ENCODE measurements at regions of chr16 and their contacts with region 1.

Region 1: DNA sequence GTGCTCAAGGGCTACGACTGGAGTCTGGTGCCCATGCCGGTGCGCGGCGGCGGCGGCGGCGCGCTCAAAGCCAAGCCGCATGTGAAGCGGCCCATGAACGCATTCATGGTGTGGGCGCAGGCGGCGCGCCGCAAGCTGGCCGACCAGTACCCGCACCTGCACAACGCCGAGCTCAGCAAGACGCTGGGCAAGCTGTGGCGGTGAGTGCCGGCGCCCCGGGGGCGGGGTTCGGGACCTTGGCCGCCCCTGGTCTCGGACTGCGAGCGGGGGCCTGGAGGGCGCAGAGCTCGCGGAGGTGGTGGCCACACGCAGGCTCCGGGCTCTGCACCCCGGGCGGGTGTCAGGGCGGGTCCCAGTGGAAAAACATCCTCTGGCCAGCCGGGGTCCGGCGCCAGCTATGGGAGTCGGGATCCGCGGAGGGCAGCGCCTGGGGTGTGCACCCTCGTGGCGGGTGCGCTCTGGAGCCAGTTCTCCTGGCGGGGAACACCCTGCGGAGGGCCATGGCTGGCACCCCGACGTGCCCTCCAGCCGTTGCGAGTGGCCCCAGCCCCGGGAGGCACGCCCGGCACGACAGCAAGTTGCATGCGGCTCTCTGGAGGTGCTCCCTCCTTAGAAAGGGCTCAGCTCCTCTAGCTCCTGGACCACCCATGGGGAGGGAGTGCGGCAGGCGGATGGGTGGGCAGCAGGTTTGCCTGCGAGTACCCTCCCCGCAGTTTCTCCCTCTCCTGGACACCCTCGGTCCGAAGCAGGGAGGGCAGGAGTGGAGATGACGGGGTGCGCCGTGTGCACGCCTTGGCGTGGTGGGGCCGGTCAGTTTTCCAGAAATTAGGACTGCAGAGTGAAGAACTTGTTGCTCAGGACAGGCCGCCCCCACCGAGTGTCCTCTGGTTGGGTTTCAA is 824 bp downstream of the SOX8 start:
- DNase-seq: no peak
- H3K4me3 ChIP-seq: peak overlapping the region; percentile 59 to 72
- H3K27ac ChIP-seq: no peak overlapping the region
- H3K4me1 ChIP-seq: peaks cover 21 to 23% of the 10 kb centered on the region in 2 donors
- H3K27me3 ChIP-seq: peaks cover 6% of the 10 kb centered on the region
- CTCF ChIP-seq: no peak

Region 2: DNA sequence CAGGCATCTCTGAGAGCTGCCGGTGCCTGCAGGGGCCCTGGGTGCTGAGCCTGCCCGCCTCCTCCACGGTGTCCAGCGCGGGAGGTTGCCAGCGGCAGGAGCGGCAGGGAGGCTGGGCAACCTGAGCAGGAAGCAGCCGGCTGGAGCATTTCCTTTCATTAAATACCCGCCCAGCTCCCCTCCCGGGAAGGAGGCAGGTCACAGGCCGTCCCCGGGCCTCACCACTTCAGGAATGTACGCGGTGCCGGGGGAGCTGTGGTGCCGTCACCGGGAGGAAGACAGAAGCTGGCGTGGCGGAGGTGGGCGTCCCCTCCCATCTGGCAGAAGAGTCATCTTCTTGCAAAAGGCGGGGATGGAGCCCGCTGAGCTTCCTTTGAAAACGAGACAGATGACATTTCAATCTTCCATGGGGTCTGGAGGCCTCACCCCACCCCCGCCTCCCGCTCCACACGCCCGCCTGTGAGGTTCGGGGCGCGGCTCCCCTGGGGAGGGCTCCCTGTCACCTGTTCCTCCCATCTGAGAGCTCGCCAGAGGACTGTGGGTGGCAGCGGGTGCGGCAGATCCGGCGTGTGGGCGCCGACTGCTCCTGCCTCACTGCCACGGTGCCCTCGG is 15.2 kb after region 1 on chr16:
- intact Hi-C with region 1: loop called (anchors 2 kb)
- DNase-seq: no peak
- H3K4me3 ChIP-seq: peak overlapping the region in 1 of 2 donors; percentile 29
- H3K27ac ChIP-seq: peak overlapping the region; percentile 1 to 56
- H3K4me1 ChIP-seq: peaks cover 0 to 3% of the 10 kb centered on the region in 2 donors
- H3K27me3 ChIP-seq: no peaks in the 10 kb centered on the region
- CTCF ChIP-seq: no peak